CD4-positive, alpha-beta memory T cell (primary cell): ENCODE measurements at regions of chr12 and their contacts with region 1.

Region 1: GRCh38 chr12:121095544-121096198 is 37.0 kb upstream of the P2RX7 start:
- DNase-seq: peak; percentile 72 to 77 (median 72)
- H3K4me3 ChIP-seq: peak overlapping the region; percentile 58 to 59
- H3K4me3 Mint-ChIP-seq: peak overlapping the region; percentile 76 to 91 (median 84)
- H3K27ac ChIP-seq: no peak overlapping the region
- H3K27ac Mint-ChIP-seq: peak overlapping the region; percentile 16 to 90 (median 76)
- H3K4me1 ChIP-seq: peaks cover 46% of the 10 kb centered on the region
- H3K4me1 Mint-ChIP-seq: peaks cover 34 to 54% (median 45%) of the 10 kb centered on the region in 4 donors
- H3K27me3 ChIP-seq: no peaks in the 10 kb centered on the region
- H3K27me3 Mint-ChIP-seq: peaks cover 1 to 7% of the 10 kb centered on the region in 2 donors

Region 2: DNA sequence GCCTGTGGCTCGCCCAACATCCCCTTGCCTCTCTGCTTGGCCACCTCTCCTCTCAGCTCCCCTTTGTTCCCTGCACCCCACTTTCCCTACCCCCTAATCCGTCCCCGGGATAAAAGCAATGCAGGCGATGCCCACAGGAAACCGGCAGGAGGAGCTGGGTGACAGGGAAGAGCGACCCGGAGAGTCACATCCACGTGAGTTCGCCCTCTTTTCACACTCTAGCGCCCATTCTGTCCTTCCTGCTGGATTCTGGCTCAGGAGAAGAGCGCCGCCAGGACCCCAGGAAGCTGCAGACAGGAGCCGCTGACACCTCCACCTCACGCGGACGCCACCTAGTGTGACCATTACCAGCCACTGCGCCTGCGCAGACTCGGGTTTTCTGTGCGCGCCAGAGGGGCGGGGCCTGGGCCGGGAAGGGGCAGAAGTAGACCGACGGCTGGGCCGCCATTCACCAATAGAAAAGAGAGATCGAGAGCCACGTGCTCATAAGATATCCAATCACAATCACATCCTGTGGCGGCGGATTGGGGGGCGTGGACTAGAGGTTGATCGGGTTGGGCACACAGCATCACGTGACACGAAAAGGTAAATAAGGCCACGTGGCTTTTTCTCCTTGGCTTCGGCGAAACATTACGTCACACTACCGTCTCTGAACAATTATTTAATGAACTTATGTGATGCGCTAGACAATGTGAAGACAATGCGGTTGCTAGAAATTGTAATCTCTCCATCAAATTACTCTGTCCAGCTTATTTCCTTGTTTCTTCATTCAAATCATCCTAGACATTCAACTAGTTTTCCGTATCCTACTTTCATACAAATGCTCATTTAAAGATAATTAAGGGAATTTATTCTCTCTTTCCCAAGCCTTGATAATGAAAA is 778.2 kb before region 1 on chr12:
- CTCF ChIA-PET with region 1: no interaction called
- POLR2A ChIA-PET with region 1: no interaction called
- intact Hi-C with region 1: loop called (anchors 10 kb)
- DNase-seq: peak; percentile 100
- H3K4me3 ChIP-seq: peak overlapping the region; percentile 42 to 65
- H3K4me3 Mint-ChIP-seq: peak overlapping the region; percentile 87 to 95 (median 92)
- H3K27ac ChIP-seq: peak overlapping the region; percentile 81
- H3K27ac Mint-ChIP-seq: peak overlapping the region; percentile 90 to 99 (median 98)
- H3K4me1 ChIP-seq: peaks cover 10% of the 10 kb centered on the region
- H3K4me1 Mint-ChIP-seq: peaks cover 11 to 16% (median 14%) of the 10 kb centered on the region in 4 donors
- H3K27me3 ChIP-seq: no peaks in the 10 kb centered on the region
- H3K27me3 Mint-ChIP-seq: no peaks in the 10 kb centered on the region

Region 3: DNA sequence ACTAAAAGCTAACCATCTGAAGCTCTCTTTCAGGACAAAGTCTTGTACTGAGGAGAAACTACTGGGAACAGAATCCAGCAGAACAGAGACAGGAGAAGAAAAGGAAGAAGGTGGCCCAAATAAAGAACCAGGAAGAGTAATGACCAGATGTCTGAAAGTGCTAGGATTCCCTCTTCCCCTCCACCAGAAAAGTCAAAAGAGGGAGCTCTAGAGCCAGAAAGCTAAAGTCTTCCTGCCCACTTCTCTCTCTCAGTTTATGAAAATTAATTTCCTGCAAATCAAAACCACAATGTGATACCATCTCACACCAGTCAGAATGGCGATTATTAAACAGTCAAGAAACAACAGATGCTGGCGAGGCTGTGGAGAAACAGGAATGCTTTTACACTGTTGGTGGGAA is 238.7 kb before region 1 on chr12:
- CTCF ChIA-PET with region 1: no interaction called
- POLR2A ChIA-PET with region 1: no interaction called
- intact Hi-C with region 1: loop called (anchors 10 kb)
- DNase-seq: peak in 3 of 5 donors; percentile 15 to 25 (median 18)
- H3K4me3 ChIP-seq: no peak overlapping the region
- H3K4me3 Mint-ChIP-seq: peak overlapping the region in 7 of 8 donors; percentile 25 to 76 (median 53)
- H3K27ac ChIP-seq: no peak overlapping the region
- H3K27ac Mint-ChIP-seq: peak overlapping the region in 6 of 7 donors; percentile 28 to 86 (median 54)
- H3K4me1 ChIP-seq: peaks cover 48% of the 10 kb centered on the region
- H3K4me1 Mint-ChIP-seq: peaks cover 36 to 70% (median 51%) of the 10 kb centered on the region in 4 donors
- H3K27me3 ChIP-seq: no peaks in the 10 kb centered on the region
- H3K27me3 Mint-ChIP-seq: no peaks in the 10 kb centered on the region

Region 4: GRCh38 chr12:121005346-121005815 is 90.3 kb before region 1 on chr12:
- CTCF ChIA-PET with region 1: interaction called, 4 read pairs
- POLR2A ChIA-PET with region 1: no interaction called
- intact Hi-C with region 1: loop called (anchors 1 kb)
- DNase-seq: peak in 4 of 5 donors; percentile 16 to 32 (median 25)
- H3K4me3 ChIP-seq: no peak overlapping the region
- H3K4me3 Mint-ChIP-seq: no peak overlapping the region
- H3K27ac ChIP-seq: no peak overlapping the region
- H3K27ac Mint-ChIP-seq: peak overlapping the region in 3 of 7 donors; percentile 15 to 73 (median 42)
- H3K4me1 ChIP-seq: no peaks in the 10 kb centered on the region
- H3K4me1 Mint-ChIP-seq: no peaks in the 10 kb centered on the region
- H3K27me3 ChIP-seq: no peaks in the 10 kb centered on the region
- H3K27me3 Mint-ChIP-seq: no peaks in the 10 kb centered on the region

Region 5: GRCh38 chr12:121015825-121016766 is 79.6 kb before region 1 on chr12 and contains the start of gene C12orf43:
- CTCF ChIA-PET with region 1: interaction called, 4 read pairs
- POLR2A ChIA-PET with region 1: no interaction called
- intact Hi-C with region 1: loop called (anchors 2 kb)
- DNase-seq: peak; percentile 87 to 94 (median 89)
- H3K4me3 ChIP-seq: peak within 1 kb of the TSS; percentile 90 to 91
- H3K4me3 Mint-ChIP-seq: peak within 1 kb of the TSS; percentile 90 to 100 (median 96)
- H3K27ac ChIP-seq: peak within 1 kb of the TSS; percentile 71
- H3K27ac Mint-ChIP-seq: peak within 1 kb of the TSS; percentile 78 to 99 (median 97)
- H3K4me1 ChIP-seq: peaks cover 15% of the 10 kb centered on the region
- H3K4me1 Mint-ChIP-seq: peaks cover 17 to 29% (median 23%) of the 10 kb centered on the region in 4 donors
- H3K27me3 ChIP-seq: no peaks in the 10 kb centered on the region
- H3K27me3 Mint-ChIP-seq: no peaks in the 10 kb centered on the region
- total RNA-seq, gene C12orf43: 13.8 to 15.4 TPM